H1 (cell line): ENCODE measurements at regions of chr3 and their contacts with region 1.

Region 1: GRCh38 chr3:64484289-64484992 is 203.4 kb downstream of the ADAMTS9 start:
- DNase-seq: peak; percentile 73 to 94
- H3K4me3 ChIP-seq: no peak overlapping the region
- H3K27ac ChIP-seq: no peak overlapping the region
- H3K4me1 ChIP-seq: peaks cover 0 to 4% (median 3%) of the 10 kb centered on the region in 4 experiments; a peak in 6 of 7 replicates
- H3K27me3 ChIP-seq: no peaks in the 10 kb centered on the region
- CTCF ChIP-seq: peak; percentile 81 to 92 (median 91)
- EP300 ChIP-seq: no peak
- POLR2A ChIP-seq: no peak
- RAD21 ChIP-seq: peak; percentile 99

Region 2: GRCh38 chr3:64030741-64031140 is 453.7 kb before region 1 on chr3:
- CTCF ChIA-PET with region 1: interaction called, 51 read pairs
- POLR2A ChIA-PET with region 1: no interaction called
- DNase-seq: peak; percentile 86 to 89
- H3K4me3 ChIP-seq: no peak overlapping the region
- H3K27ac ChIP-seq: no peak overlapping the region
- H3K4me1 ChIP-seq: peaks cover 0 to 7% (median 3%) of the 10 kb centered on the region in 4 experiments; a peak in 5 of 7 replicates
- H3K27me3 ChIP-seq: no peaks in the 10 kb centered on the region
- CTCF ChIP-seq: peak; percentile 82 to 94 (median 89)
- EP300 ChIP-seq: no peak
- POLR2A ChIP-seq: no peak
- RAD21 ChIP-seq: peak; percentile 98 to 99

Region 3: DNA sequence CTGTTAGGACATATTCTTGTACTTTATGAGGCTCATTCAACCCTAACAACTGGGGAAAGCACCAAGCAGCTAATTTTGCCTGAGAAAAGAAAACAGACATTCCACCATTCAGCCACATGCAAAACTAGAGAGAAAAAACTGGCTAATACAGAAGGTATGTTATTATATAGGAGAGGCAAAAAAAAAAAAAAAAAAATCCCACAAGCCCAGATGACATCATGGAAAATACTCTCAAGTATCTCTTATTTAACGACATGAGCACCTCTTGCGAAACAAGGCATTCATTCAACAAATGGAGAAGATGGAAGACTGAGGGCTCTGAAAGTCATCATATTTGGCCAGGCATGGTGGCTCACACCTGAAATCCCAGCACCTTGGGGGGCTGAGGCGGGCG is 320.7 kb before region 1 on chr3:
- CTCF ChIA-PET with region 1: interaction called, 25 read pairs
- POLR2A ChIA-PET with region 1: no interaction called
- DNase-seq: no peak
- H3K4me3 ChIP-seq: no peak overlapping the region
- H3K27ac ChIP-seq: no peak overlapping the region
- H3K4me1 ChIP-seq: peaks cover 3 to 22% (median 15%) of the 10 kb centered on the region in 4 experiments; a peak in 5 of 7 replicates
- H3K27me3 ChIP-seq: no peaks in the 10 kb centered on the region
- CTCF ChIP-seq: no peak
- EP300 ChIP-seq: no peak
- POLR2A ChIP-seq: no peak
- RAD21 ChIP-seq: no peak

Region 4: DNA sequence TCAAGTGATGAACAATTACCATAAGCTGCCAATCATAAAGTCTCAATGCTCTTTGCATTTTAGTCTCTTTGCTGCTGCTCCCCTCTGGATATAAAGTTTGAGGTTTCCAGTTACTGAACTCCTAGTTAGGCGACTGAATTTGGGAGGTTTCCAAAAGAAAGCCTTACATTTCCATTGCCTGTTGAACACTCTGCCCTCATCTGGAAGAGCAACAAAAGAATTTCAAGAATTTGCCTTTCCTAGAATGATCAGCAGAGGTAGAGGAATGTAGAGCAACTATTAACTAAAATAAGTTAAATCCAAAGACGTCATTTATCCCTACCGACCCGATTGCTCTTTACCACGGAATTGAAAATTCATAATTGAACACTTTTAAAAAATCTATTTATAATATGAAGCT is 205.8 kb before region 1 on chr3:
- CTCF ChIA-PET with region 1: interaction called, 11 read pairs
- POLR2A ChIA-PET with region 1: no interaction called
- DNase-seq: no peak
- H3K4me3 ChIP-seq: no peak overlapping the region
- H3K27ac ChIP-seq: no peak overlapping the region
- H3K4me1 ChIP-seq: peaks cover 0 to 9% (median 0%) of the 10 kb centered on the region in 4 experiments; a peak in 1 of 7 replicates
- H3K27me3 ChIP-seq: 0 out of 7 replicates have a peak, but pooled peaks cover 0 to 2% (median 0%) of the 10 kb centered on the region in 4 experiments
- CTCF ChIP-seq: no peak
- EP300 ChIP-seq: no peak
- POLR2A ChIP-seq: no peak
- RAD21 ChIP-seq: no peak

Region 5: GRCh38 chr3:64399205-64399800 is 85.1 kb before region 1 on chr3:
- CTCF ChIA-PET with region 1: interaction called, 11 read pairs
- POLR2A ChIA-PET with region 1: no interaction called
- DNase-seq: no peak
- H3K4me3 ChIP-seq: no peak overlapping the region
- H3K27ac ChIP-seq: no peak overlapping the region
- H3K4me1 ChIP-seq: peaks cover 0 to 7% (median 1%) of the 10 kb centered on the region in 4 experiments; a peak in 4 of 7 replicates
- H3K27me3 ChIP-seq: no peaks in the 10 kb centered on the region
- CTCF ChIP-seq: peak in 2 of 3 experiments; percentile 74 to 77; a peak in 3 of 4 replicates
- EP300 ChIP-seq: no peak
- POLR2A ChIP-seq: no peak
- RAD21 ChIP-seq: peak; percentile 83 to 86

Region 6: DNA sequence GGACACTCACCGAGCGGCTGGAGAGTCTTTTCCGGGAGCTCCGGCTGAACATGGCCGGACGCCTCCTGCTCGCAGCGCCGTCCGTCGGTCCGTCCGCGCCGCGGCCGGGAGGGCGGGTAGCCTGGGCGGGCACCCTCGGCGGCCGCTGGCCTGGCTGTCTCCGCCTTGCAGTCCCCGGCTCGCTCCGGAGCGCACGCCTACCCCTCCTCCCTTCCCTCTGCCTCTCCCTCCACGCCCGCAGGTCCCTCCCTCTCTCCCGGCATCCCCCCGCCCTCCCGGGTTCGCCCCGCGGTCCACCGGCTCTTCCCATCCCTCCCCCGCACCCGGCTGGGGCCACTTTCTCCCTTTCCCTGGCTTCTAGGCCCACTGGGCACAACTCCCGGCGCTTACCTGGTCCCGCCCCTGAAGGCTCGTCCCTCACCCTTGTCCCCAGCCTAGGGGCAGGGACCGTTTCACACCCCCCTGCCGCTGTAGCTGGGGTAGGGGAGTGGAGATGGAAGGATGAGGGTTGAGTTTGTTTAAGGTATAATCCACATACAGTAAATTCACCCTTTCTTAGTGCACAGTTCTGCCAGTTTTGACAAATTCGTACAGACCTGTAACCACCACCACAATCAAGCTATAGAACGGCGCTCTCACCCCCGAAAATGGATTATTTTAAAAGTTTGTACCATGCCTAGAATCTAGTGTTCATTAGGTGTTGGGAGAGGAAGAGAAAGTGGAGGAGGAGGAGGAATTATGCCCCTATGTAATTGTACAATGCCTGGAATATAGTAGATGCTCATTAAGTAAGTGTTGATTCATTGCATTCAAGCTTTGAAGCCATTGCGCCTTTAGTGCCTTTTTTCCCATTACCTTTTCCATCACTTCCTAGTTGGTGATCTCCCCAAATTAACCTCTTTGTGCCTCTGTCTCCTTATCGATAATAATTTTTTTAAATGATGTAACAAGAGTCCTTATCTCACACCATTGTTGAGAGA is 38.8 kb before region 1 on chr3:
- CTCF ChIA-PET with region 1: interaction called, 10 read pairs
- POLR2A ChIA-PET with region 1: no interaction called
- DNase-seq: peak; percentile 54 to 90
- H3K4me3 ChIP-seq: peak overlapping the region; percentile 63 to 82 (median 74)
- H3K27ac ChIP-seq: no peak overlapping the region
- H3K4me1 ChIP-seq: peaks cover 4 to 25% (median 17%) of the 10 kb centered on the region in 4 experiments
- H3K27me3 ChIP-seq: no peaks in the 10 kb centered on the region; a peak in 2 of 7 replicates
- CTCF ChIP-seq: no peak
- EP300 ChIP-seq: no peak
- POLR2A ChIP-seq: 0 out of 3 replicates have a peak, but pooled peaks of 1 of the 2 experiments have one; percentile 24
- RAD21 ChIP-seq: no peak; a peak in 1 of 4 replicates

Region 7: GRCh38 chr3:64533617-64534317 is 49.3 kb after region 1 on chr3:
- CTCF ChIA-PET with region 1: interaction called, 12 read pairs
- POLR2A ChIA-PET with region 1: no interaction called
- DNase-seq: peak; percentile 86 to 90
- H3K4me3 ChIP-seq: no peak overlapping the region
- H3K27ac ChIP-seq: no peak overlapping the region
- H3K4me1 ChIP-seq: peaks cover 0 to 3% (median 0%) of the 10 kb centered on the region in 4 experiments; a peak in 1 of 7 replicates
- H3K27me3 ChIP-seq: peaks cover 9 to 23% (median 21%) of the 10 kb centered on the region in 4 experiments
- CTCF ChIP-seq: peak; percentile 88 to 98 (median 91)
- EP300 ChIP-seq: no peak
- POLR2A ChIP-seq: no peak
- RAD21 ChIP-seq: peak; percentile 100

Region 8: GRCh38 chr3:64584179-64584578 is 99.7 kb after region 1 on chr3:
- CTCF ChIA-PET with region 1: no interaction called
- POLR2A ChIA-PET with region 1: no interaction called
- DNase-seq: no peak
- H3K4me3 ChIP-seq: no peak overlapping the region
- H3K27ac ChIP-seq: no peak overlapping the region
- H3K4me1 ChIP-seq: peaks cover 0 to 8% (median 2%) of the 10 kb centered on the region in 4 experiments; a peak in 4 of 7 replicates
- H3K27me3 ChIP-seq: no peaks in the 10 kb centered on the region
- CTCF ChIP-seq: no peak
- EP300 ChIP-seq: no peak
- POLR2A ChIP-seq: no peak
- RAD21 ChIP-seq: no peak

Region 9: GRCh38 chr3:64612082-64612860 is 127.8 kb after region 1 on chr3:
- CTCF ChIA-PET with region 1: no interaction called
- POLR2A ChIA-PET with region 1: no interaction called
- DNase-seq: no peak
- H3K4me3 ChIP-seq: no peak overlapping the region
- H3K27ac ChIP-seq: no peak overlapping the region
- H3K4me1 ChIP-seq: no peaks in the 10 kb centered on the region
- H3K27me3 ChIP-seq: peaks cover 0 to 1% (median 0%) of the 10 kb centered on the region in 4 experiments; a peak in 1 of 7 replicates
- CTCF ChIP-seq: no peak
- EP300 ChIP-seq: no peak
- POLR2A ChIP-seq: no peak
- RAD21 ChIP-seq: no peak

Region 10: GRCh38 chr3:64627471-64628321 is 143.3 kb after region 1 on chr3:
- CTCF ChIA-PET with region 1: no interaction called
- POLR2A ChIA-PET with region 1: no interaction called
- DNase-seq: no peak
- H3K4me3 ChIP-seq: no peak overlapping the region
- H3K27ac ChIP-seq: no peak overlapping the region
- H3K4me1 ChIP-seq: peaks cover 0 to 5% (median 0%) of the 10 kb centered on the region in 4 experiments; a peak in 1 of 7 replicates
- H3K27me3 ChIP-seq: no peaks in the 10 kb centered on the region
- CTCF ChIP-seq: no peak
- EP300 ChIP-seq: no peak
- POLR2A ChIP-seq: no peak
- RAD21 ChIP-seq: no peak